ENCODE measurements at regions of chr4 and their contacts with region 1.

Region 1: DNA sequence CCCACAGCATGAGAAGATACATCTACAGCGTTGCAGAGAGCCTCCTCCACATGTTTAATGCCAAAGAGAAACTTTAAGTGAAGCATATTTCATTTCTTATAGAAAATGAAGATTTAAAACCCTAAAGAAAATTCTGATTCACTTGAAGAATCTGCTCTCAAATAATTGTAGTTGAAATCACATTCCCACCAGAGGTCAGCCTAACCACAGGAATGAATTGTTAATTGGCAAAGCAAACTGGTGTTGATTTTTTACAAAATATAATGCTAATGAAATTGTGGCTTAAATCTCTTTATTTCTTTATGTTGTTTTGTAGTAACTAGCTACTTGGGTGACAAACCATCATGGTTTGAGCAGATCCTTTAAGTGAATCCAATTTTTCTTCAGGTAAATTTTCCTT is 31.1 kb upstream of the WDR17 start:
- DNase-seq: peak; percentile 24
- H3K4me3 ChIP-seq: no peak overlapping the region
- H3K27ac ChIP-seq: no peak overlapping the region
- H3K4me1 ChIP-seq: no peaks in the 10 kb centered on the region
- H3K27me3 ChIP-seq: peaks cover 4% of the 10 kb centered on the region
- CTCF ChIP-seq: peak; percentile 55
- EP300 ChIP-seq: no peak
- RAD21 ChIP-seq: peak; percentile 84

Region 2: GRCh38 chr4:176054942-176055341 is 20.4 kb after region 1 on chr4:
- CTCF ChIA-PET with region 1: interaction called, 11 read pairs
- POLR2A ChIA-PET with region 1: no interaction called
- DNase-seq: no peak
- H3K4me3 ChIP-seq: no peak overlapping the region
- H3K27ac ChIP-seq: no peak overlapping the region
- H3K4me1 ChIP-seq: no peaks in the 10 kb centered on the region
- H3K27me3 ChIP-seq: no peaks in the 10 kb centered on the region
- CTCF ChIP-seq: peak; percentile 32
- EP300 ChIP-seq: no peak
- RAD21 ChIP-seq: no peak; the same call in 1 of the 2 replicates

Region 3: GRCh38 chr4:176277162-176277904 is 242.8 kb after region 1 on chr4:
- CTCF ChIA-PET with region 1: interaction called, 11 read pairs
- POLR2A ChIA-PET with region 1: no interaction called
- DNase-seq: peak; percentile 51
- H3K4me3 ChIP-seq: no peak overlapping the region
- H3K27ac ChIP-seq: no peak overlapping the region
- H3K4me1 ChIP-seq: peaks cover 2 to 14% of the 10 kb centered on the region in 2 experiments; a peak in 2 of 4 replicates
- H3K27me3 ChIP-seq: no peaks in the 10 kb centered on the region
- CTCF ChIP-seq: peak; percentile 73
- EP300 ChIP-seq: no peak
- RAD21 ChIP-seq: peak; percentile 65

Measured in SK-N-SH (cell line).